IMR-90 (cell line): ENCODE measurements at regions of chrX and their contacts with region 1.

Region 1: GRCh38 chrX:56563231-56564161 is at the start of gene UBQLN2:
- DNase-seq: peak; percentile 70
- ATAC-seq: peak; percentile 91
- H3K4me3 ChIP-seq: peak within 1 kb of the TSS; percentile 93
- H3K27ac ChIP-seq: peak within 1 kb of the TSS; percentile 99
- H3K4me1 ChIP-seq: no peaks in the 10 kb centered on the region; the same call in 1 of the 2 replicates
- H3K27me3 ChIP-seq: no peaks in the 10 kb centered on the region
- CTCF ChIP-seq: 0 out of 2 replicates have a peak, but pooled peaks have one; percentile 25
- POLR2A ChIP-seq: peak; percentile 77
- RAD21 ChIP-seq: no peak
- total RNA-seq, gene UBQLN2: 4.1 and 5.6 TPM in 2 replicates

Region 2: DNA sequence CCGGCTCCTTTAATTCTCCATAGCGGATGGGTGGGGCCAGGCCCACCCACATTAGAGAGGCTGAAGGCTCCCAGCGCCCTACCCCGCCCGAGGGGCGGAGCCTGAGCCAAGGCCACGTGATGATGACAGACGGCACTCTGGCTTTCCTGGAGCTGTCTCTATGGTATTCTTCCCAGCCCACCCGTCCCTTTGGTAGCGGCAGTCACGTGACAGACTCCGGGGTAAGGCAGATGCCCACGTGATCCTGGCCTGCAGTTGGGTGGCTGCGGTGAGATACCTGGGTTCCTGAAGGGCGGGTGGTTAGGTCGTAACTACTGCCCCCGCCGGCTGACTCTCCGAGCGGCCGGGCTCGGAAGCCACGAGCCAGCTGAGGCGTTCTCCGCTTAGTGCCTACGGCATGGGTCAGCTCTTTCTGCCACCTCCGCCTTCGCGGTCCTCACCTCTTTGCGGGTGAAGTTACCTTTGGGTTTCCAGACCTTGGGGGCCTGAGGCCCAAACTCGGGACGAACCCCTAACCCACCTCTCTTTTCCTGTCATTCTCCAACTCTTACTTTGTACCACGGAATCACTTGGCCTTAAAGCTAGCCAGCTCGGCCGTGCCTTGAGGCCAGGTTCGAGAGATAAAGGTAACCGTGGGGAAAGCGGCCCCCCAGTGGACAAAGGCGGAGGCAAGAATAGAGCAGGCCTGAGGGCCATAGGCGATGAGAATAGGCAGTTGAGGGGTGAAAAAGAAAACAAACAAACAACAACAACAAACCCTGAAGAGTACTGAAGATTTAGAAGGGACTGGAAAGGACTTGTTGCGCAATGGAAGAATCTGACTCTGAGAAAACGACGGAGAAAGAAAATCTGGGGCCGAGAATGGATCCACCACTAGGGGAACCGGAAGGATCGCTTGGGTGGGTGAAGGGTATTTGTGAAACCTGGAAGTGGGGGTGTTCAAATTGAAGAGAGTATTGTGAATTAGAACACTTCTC is 845.7 kb before region 1 on chrX and contains the start of gene RRAGB:
- CTCF ChIA-PET with region 1: no interaction called
- POLR2A ChIA-PET with region 1: no interaction called
- dilution Hi-C with region 1: no loop called
- in situ Hi-C with region 1: no loop called
- intact Hi-C with region 1: loop called (anchors 5 kb)
- DNase-seq: peak; percentile 91
- ATAC-seq: peak; percentile 100
- H3K4me3 ChIP-seq: peak within 1 kb of the TSS; percentile 69
- H3K27ac ChIP-seq: peak within 1 kb of the TSS; percentile 44
- H3K4me1 ChIP-seq: no peaks in the 10 kb centered on the region
- H3K27me3 ChIP-seq: no peaks in the 10 kb centered on the region
- CTCF ChIP-seq: peak; percentile 41
- POLR2A ChIP-seq: no peak
- RAD21 ChIP-seq: no peak
- total RNA-seq, gene RRAGB: 9.1 and 17.2 TPM in 2 replicates

Region 3: DNA sequence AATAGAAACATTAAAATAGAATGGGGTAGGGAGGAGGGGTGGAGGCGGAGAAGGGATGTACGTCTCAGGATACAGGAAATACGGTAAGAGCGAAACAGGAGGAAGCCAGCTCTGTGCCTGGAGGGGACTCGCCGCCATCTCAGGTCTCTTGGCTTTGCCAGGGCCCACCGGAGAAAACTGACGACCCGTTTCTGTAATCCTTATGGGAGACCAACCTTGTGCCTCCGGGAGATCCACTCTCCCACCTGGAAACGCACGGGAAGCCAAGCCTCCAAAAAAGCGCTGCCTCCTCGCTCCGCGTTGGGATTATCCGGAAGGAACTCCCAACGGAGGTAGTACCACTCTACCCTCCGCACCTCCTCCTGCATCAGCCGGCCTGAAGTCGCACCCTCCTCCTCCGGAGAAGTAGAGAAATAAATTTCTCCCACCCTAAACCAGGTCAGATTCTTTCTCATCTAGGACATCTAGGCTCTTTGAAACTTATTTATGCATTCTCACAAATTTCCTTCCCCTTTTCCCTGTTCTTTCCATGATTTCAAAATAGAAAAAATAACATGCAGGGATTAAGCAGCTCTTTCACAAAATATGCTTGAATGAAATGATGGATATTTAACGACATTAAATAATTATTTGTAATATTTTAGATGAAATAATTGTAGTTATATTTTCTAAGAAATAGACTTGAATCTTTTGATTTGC is 165.8 kb after region 1 on chrX and contains the start of gene NBDY:
- CTCF ChIA-PET with region 1: no interaction called
- POLR2A ChIA-PET with region 1: no interaction called
- dilution Hi-C with region 1: no loop called
- in situ Hi-C with region 1: no loop called
- intact Hi-C with region 1: loop called (anchors 5 kb)
- DNase-seq: peak; percentile 37
- ATAC-seq: peak; percentile 93
- H3K4me3 ChIP-seq: peak within 1 kb of the TSS; percentile 99
- H3K27ac ChIP-seq: peak within 1 kb of the TSS; percentile 100
- H3K4me1 ChIP-seq: no peaks in the 10 kb centered on the region
- H3K27me3 ChIP-seq: no peaks in the 10 kb centered on the region
- CTCF ChIP-seq: no peak
- POLR2A ChIP-seq: peak; percentile 56; the same call in 1 of the 2 replicates
- RAD21 ChIP-seq: no peak
- total RNA-seq, gene NBDY: 2.5 and 3.2 TPM in 2 replicates